Posterior vena cava (tissue), 2 donors: ENCODE measurements at regions of chr19 and their contacts with region 1.

Region 1: GRCh38 chr19:18419195-18419698 is at the start of gene SSBP4:
- DNase-seq: peak; percentile 88
- total RNA-seq, gene SSBP4: 54.4 to 56.9 TPM

Region 2: GRCh38 chr19:17469481-17470067 is 949.7 kb before region 1 on chr19:
- intact Hi-C with region 1: loop called in 1 of 2 experiments (anchors 10 kb)
- DNase-seq: peak; percentile 97

Region 3: GRCh38 chr19:18281082-18282020 is 137.9 kb before region 1 on chr19 and contains the start of gene JUND:
- intact Hi-C with region 1: loop called in 1 of 2 experiments (anchors 10 kb)
- DNase-seq: peak; percentile 99
- total RNA-seq, gene JUND: 192 to 231 TPM

Region 4: GRCh38 chr19:18349524-18350128 is 69.6 kb before region 1 on chr19:
- intact Hi-C with region 1: loop called in 1 of 2 experiments (anchors 5 kb)
- DNase-seq: peak; percentile 88

Region 5: DNA sequence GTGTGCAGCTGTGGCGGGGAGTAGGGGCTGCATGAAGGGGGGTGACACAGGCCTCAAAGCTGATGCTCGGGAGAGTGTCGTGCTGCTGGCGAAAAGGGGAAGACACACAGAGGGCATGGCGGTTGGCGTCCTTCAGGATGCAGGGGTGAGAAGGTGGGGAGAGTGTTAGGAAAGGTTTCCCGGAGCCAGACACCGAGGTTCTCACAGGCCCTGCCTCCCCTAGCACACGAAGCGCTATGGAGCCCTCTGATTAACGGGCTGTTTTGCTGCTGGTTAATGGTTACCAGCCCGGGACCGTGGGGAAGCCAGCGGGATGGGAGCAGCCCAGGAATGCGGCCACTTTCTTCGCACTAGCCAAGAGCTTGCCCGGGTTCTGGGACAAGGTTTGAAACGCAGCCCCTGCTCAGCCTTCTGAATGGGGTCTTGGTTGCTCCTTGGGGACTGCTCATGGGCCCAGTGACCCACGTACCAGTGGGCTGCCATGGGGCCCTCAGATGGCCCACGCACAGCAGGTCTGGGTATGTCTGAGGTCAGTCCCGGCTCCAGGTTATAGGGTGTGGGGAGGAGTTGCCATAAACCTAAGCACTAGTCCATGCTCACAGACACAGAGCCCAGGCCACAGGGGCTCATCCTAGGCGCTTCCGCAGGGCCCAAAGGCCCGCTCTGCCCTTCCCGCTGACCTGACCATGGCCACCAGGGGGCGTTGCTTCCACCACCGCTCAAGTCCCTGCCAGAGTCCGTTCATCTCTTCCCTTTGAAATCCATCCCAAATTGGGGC is 50.0 kb after region 1 on chr19:
- intact Hi-C with region 1: loop called in 1 of 2 experiments (anchors 1 kb)
- DNase-seq: peak; percentile 92

Region 6: GRCh38 chr19:18503971-18504885 is 85.0 kb after region 1 on chr19:
- intact Hi-C with region 1: no loop called
- DNase-seq: no peak